ENCODE measurements at regions of chr3 and their contacts with region 1.

Region 1: DNA sequence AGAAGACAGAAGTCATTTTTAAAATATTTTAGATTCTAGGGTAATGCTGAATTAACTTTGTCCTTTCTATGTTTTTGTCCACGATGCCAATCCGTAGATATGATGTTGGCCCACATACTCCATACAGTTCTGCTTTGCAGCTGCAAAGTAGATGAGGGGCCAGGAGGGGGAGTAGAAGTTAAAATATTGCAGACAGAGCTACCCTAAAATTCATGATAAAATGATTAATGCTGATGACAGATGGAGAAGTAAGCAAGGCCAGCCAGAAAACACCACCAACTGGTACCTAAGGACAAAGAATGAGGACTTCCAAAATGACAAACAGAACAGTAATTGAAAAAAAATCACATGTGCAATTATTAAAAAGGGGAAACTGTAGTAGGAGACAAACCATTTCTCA is 756.6 kb upstream of the ARPP21 start:
- DNase-seq: no peak
- H3K4me3 Mint-ChIP-seq: no peak overlapping the region
- H3K27ac Mint-ChIP-seq: no peak overlapping the region
- H3K4me1 Mint-ChIP-seq: no peaks in the 10 kb centered on the region
- H3K27me3 Mint-ChIP-seq: peaks cover 2% of the 10 kb centered on the region

Region 2: DNA sequence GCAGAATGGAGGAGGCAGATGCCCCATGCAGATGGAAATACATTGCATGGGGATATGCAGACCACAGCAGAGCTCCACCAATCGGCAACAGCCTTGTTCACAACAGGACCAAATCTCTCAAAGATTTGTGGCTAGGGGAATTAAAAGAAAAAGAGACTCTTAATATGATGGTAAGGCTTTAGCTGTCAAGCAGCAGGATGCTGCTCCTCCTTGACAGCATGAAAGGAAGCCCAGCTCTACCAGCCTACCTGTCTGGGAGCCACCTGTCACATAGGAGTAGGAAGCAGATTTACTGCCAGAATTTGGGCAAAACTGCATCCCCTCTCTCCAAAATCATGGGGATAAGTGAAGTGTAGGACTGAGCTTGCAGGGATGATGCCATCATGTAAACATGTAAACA is 13.1 kb before region 1 on chr3:
- CTCF ChIA-PET with region 1: no interaction called
- intact Hi-C with region 1: no loop called
- DNase-seq: no peak
- H3K4me3 Mint-ChIP-seq: no peak overlapping the region
- H3K27ac Mint-ChIP-seq: no peak overlapping the region
- H3K4me1 Mint-ChIP-seq: no peaks in the 10 kb centered on the region
- H3K27me3 Mint-ChIP-seq: no peaks in the 10 kb centered on the region

Region 3: GRCh38 chr3:35908366-35909232 is 1025.8 kb after region 1 on chr3:
- CTCF ChIA-PET with region 1: no interaction called
- intact Hi-C with region 1: loop called (anchors 2 kb)
- DNase-seq: peak; percentile 72
- H3K4me3 Mint-ChIP-seq: no peak overlapping the region
- H3K27ac Mint-ChIP-seq: no peak overlapping the region
- H3K4me1 Mint-ChIP-seq: no peaks in the 10 kb centered on the region
- H3K27me3 Mint-ChIP-seq: peaks cover 3% of the 10 kb centered on the region

Measured in activated naive CD4-positive, alpha-beta T cell treated with anti-CD3 and anti-CD28 coated beads for 36 hours (primary cell).